Activated T-helper 2 cell treated with anti-CD3 and anti-CD28 coated beads, Interferon-gamma antibody, Interleukin-2, Interleukin-4, amounts not matched to agents 10 μg/mL and 5 μg/mL and 100 μg/mL, durations not matched to agents 14 hours and 24 hours and 36 hours (primary cell): ENCODE measurements at regions of chr12 and their contacts with region 1.

Region 1: GRCh38 chr12:103698752-103699560 is 111.9 kb downstream of the STAB2 start:
- DNase-seq: no peak
- H3K4me3 Mint-ChIP-seq: no peak overlapping the region
- H3K27ac Mint-ChIP-seq: no peak overlapping the region
- H3K4me1 Mint-ChIP-seq: peaks cover 6% of the 10 kb centered on the region
- H3K27me3 Mint-ChIP-seq: peaks cover 11% of the 10 kb centered on the region

Region 2: DNA sequence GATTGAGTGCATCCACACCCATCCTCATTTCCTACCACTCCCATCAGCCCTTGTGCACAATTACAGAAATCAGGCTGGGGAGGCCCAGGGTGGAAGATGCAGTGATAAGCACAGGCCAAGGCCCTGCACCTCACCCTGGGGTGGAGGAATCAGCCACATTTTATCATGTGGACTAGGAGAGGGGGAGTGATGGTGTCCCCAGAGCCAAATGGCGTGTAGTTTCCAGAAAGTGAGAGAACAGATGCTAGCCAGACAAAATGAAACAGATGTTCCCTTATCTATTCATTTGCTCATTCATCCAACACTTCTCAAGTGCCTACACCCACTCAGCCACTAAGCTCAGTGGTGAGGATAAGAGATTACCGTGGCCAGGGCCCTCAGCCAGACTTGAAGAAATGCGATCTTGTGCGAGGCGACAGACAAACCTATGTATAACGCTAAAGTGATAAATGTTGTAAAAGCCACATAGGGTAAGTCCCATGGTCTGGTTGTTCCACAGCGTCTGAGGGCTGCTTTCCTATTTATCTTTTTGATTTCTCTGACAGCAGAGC is 18.3 kb before region 1 on chr12:
- intact Hi-C with region 1: loop called (anchors 2 kb)
- DNase-seq: no peak
- H3K4me3 Mint-ChIP-seq: no peak overlapping the region
- H3K27ac Mint-ChIP-seq: no peak overlapping the region
- H3K4me1 Mint-ChIP-seq: no peaks in the 10 kb centered on the region
- H3K27me3 Mint-ChIP-seq: peaks cover 4% of the 10 kb centered on the region

Region 3: DNA sequence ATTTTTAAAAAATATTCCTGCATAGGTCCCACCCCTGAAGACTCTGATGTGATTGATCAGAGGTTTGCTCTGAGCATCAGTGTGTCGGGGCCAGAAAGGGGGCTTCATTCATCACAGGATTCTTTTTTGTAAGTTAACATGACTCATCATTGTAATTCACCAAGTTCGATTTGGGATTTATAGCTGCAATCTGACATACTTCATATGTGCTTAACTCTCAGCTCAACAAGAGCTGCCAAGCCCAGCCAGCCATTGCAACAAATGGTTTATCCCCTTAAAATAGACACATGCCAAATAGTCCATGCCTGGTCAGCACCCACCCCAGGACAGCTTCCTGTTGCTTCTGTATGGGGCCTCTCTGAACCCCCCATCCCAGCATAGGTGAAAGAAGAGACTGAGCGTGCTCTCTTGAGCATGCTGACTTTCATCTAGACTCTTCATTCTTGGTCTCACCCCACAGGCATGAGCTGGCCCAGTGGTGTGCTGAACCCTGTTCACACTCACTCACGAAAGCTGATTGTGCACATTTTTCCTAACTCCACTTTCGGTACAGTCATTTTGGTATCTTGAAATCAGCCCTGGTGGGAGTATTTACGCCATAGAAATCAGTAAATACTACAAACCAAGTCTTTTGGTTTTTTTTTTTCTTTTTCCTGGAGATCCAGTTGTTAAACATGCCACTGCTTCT is 10.4 kb before region 1 on chr12:
- intact Hi-C with region 1: loop called (anchors 1 kb)
- DNase-seq: no peak
- H3K4me3 Mint-ChIP-seq: no peak overlapping the region
- H3K27ac Mint-ChIP-seq: no peak overlapping the region
- H3K4me1 Mint-ChIP-seq: no peaks in the 10 kb centered on the region
- H3K27me3 Mint-ChIP-seq: peaks cover 4% of the 10 kb centered on the region